Gastrocnemius medialis (tissue), 4 donors: ENCODE measurements at regions of chr3 and their contacts with region 1.

Region 1: DNA sequence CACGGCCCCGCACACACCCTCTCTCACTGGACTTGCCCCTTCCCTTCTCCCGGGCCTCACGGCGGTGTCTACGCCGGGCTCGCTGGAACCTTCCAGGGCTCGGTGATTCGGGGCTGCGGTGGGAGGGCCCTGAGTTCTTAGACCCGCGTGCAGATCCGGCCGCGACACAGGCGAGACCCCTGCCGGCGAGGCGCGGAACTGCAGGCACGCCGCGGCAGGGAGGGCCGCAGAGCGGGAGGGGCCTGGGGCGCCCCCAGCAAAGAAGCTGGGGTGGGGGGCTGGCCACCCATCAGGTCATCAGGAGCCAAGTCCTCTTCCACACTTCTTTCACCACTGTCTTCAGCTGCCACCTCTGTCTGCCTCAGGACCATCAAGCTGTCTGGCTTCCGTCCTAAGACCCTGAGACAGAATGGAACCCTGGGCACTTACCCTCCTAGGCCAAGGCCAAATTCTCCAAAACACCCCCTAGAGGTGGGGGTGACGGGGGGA is 164.5 kb downstream of the XXYLT1 start:
- DNase-seq: peak in 1 of 2 donors; percentile 33
- ATAC-seq: peak; percentile 33 to 68
- H3K4me3 ChIP-seq: peak overlapping the region; percentile 5 to 42 (median 31)
- H3K27ac ChIP-seq: no peak overlapping the region
- H3K4me1 ChIP-seq: peaks cover 13 to 23% of the 10 kb centered on the region in 2 donors
- H3K27me3 ChIP-seq: no peaks in the 10 kb centered on the region
- CTCF ChIP-seq: peak; percentile 96 to 100 (median 99)
- POLR2A ChIP-seq: no peak

Region 2: DNA sequence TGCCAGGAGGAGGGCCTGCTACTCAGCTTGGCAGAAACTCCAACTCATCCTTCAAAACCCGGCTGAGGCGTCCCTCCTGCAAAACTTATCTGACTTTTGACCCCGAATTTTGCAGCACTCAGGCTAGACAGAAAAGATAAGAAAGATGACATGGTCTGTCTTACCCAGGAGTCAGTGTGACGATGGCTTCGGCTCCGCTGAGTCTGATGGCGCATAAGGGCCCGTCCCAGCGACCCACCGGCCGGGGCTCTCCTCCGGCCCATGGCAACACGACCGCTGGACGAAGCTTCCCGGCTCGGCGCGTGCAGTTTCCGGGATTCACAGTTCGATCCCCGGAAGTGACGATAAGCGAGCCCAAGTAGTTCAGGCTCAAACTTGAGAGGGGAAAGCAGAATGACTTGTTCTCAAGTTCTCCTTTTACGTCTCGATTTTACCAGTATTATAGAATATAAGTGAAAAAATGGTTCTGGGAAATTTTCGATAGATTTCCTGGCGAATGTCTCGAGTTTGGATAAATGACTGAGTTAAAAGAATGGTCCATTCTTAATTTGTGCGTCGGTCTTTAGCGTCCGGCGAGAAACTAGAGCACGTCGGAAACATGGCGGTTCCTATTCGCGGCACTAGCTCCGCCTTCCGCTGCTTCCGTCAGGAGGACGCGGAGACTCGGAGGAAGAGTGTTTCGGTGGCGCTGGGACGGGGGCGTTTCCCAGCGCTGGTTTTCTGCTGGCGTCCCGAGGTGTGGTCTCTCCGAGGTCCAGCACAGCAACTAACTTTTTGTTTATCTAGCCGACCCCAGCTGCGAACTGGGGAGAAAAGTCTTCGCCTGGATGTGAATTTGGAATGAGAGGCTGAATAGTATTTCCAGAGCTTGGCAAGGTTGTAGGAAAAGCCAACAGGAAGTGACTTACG is 434.3 kb before region 1 on chr3 and contains the start of gene LSG1:
- in situ Hi-C with region 1: loop called in 1 of 4 experiments (anchors 5 kb)
- intact Hi-C with region 1: loop called (anchors 2 kb)
- DNase-seq: peak; percentile 84 to 88
- ATAC-seq: peak; percentile 98
- H3K4me3 ChIP-seq: peak within 1 kb of the TSS; percentile 66 to 95 (median 87)
- H3K27ac ChIP-seq: peak within 1 kb of the TSS; percentile 83 to 91 (median 88)
- H3K4me1 ChIP-seq: peaks cover 32 to 33% of the 10 kb centered on the region in 2 donors
- H3K27me3 ChIP-seq: no peaks in the 10 kb centered on the region
- CTCF ChIP-seq: no peak
- POLR2A ChIP-seq: peak; percentile 49 to 64
- total RNA-seq, gene LSG1: 23.2 to 38.4 (median 28.0) TPM

Region 3: GRCh38 chr3:195001961-195002861 is 104.3 kb before region 1 on chr3:
- in situ Hi-C with region 1: no loop called
- intact Hi-C with region 1: loop called (anchors 1 kb)
- DNase-seq: peak in 1 of 2 donors; percentile 24
- ATAC-seq: peak; percentile 33 to 42
- H3K4me3 ChIP-seq: no peak overlapping the region
- H3K27ac ChIP-seq: peak overlapping the region; percentile 25 to 52 (median 39)
- H3K4me1 ChIP-seq: peaks cover 22% of the 10 kb centered on the region in 2 donors
- H3K27me3 ChIP-seq: no peaks in the 10 kb centered on the region
- CTCF ChIP-seq: peak; percentile 41 to 67 (median 51)
- POLR2A ChIP-seq: no peak

Region 4: GRCh38 chr3:195020921-195021320 is 85.5 kb before region 1 on chr3:
- in situ Hi-C with region 1: no loop called
- intact Hi-C with region 1: no loop called
- DNase-seq: no peak
- ATAC-seq: peak; percentile 24 to 39
- H3K4me3 ChIP-seq: no peak overlapping the region
- H3K27ac ChIP-seq: peak overlapping the region in 2 of 4 donors; percentile 26 to 57
- H3K4me1 ChIP-seq: no peaks in the 10 kb centered on the region
- H3K27me3 ChIP-seq: no peaks in the 10 kb centered on the region
- CTCF ChIP-seq: no peak
- POLR2A ChIP-seq: no peak